WTC11 (cell line): ENCODE measurements at regions of chr1 and their contacts with region 1.

Region 1: DNA sequence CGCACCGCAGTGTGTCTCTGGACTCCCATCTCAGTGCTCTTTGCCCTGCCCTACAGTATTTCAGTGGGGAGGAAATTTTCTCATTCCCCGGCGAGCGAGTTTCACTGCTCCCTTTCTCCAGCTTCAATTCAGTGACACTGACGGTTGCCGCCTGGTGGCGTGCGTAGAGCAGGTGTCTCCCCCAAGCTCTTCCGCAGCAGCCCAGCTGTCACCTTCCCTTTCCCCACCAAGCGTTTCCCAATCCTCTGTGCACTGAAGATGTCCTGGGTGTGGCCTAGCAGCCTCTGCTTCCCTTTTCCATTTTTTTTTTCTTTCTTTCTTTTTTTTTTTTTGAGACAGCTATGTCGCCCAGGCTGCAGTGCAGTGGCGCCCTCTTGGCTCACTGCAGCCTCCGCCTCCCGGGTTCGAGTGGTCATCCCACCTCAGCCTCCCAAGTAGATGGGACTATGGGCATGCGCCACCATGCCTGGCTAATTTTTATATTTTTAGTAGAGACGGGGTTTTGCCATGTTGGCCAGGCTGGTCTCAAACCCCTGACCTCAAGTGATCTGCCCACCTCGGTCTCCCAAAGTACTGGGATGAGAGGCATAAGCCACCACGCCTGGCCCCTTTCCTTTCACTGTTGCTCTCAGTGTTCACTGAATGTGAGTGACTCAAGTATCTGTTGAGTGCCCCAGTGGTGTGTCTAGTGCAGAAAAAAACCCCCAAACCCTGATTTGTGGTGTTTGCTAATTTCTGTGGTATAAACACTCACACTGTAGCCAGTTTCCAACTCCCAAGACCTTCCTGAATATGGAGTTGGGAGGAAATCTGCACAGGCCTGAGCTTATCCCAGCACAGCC is 30.1 kb downstream of the TNFRSF1B start:
- DNase-seq: peak; percentile 64
- ATAC-seq: peak; percentile 74
- H3K4me3 Mint-ChIP-seq: no peak overlapping the region
- H3K27ac Mint-ChIP-seq: no peak overlapping the region
- H3K4me1 Mint-ChIP-seq: peaks cover 13% of the 10 kb centered on the region
- H3K27me3 Mint-ChIP-seq: no peaks in the 10 kb centered on the region
- CTCF ChIP-seq: no peak

Region 2: GRCh38 chr1:12153181-12153785 is 43.6 kb before region 1 on chr1:
- CTCF ChIA-PET with region 1: interaction called, 13 read pairs
- POLR2A ChIA-PET with region 1: no interaction called
- DNase-seq: no peak
- ATAC-seq: no peak
- H3K4me3 Mint-ChIP-seq: no peak overlapping the region
- H3K27ac Mint-ChIP-seq: no peak overlapping the region
- H3K4me1 Mint-ChIP-seq: peaks cover 11% of the 10 kb centered on the region
- H3K27me3 Mint-ChIP-seq: peaks cover 16% of the 10 kb centered on the region
- CTCF ChIP-seq: no peak

Region 3: GRCh38 chr1:12166834-12167492 is 29.9 kb before region 1 on chr1 and contains the start of gene TNFRSF1B:
- CTCF ChIA-PET with region 1: interaction called, 16 read pairs
- POLR2A ChIA-PET with region 1: no interaction called
- DNase-seq: peak; percentile 67
- ATAC-seq: peak; percentile 90
- H3K4me3 Mint-ChIP-seq: peak within 1 kb of the TSS; percentile 69
- H3K27ac Mint-ChIP-seq: no peak within 1 kb of the TSS
- H3K4me1 Mint-ChIP-seq: peaks cover 17% of the 10 kb centered on the region
- H3K27me3 Mint-ChIP-seq: peaks cover 47% of the 10 kb centered on the region
- CTCF ChIP-seq: no peak
- total RNA-seq, gene TNFRSF1B: 1.6 to 2.7 TPM (median 2.1 TPM) in 3 replicates

Region 4: GRCh38 chr1:12177999-12178441 is 18.8 kb before region 1 on chr1:
- CTCF ChIA-PET with region 1: interaction called, 14 read pairs
- POLR2A ChIA-PET with region 1: interaction called, 5 read pairs
- DNase-seq: no peak
- ATAC-seq: peak; percentile 51
- H3K4me3 Mint-ChIP-seq: no peak overlapping the region
- H3K27ac Mint-ChIP-seq: no peak overlapping the region
- H3K4me1 Mint-ChIP-seq: peaks cover 30% of the 10 kb centered on the region
- H3K27me3 Mint-ChIP-seq: no peaks in the 10 kb centered on the region; the same call in 1 of the 2 replicates
- CTCF ChIP-seq: no peak

Region 5: DNA sequence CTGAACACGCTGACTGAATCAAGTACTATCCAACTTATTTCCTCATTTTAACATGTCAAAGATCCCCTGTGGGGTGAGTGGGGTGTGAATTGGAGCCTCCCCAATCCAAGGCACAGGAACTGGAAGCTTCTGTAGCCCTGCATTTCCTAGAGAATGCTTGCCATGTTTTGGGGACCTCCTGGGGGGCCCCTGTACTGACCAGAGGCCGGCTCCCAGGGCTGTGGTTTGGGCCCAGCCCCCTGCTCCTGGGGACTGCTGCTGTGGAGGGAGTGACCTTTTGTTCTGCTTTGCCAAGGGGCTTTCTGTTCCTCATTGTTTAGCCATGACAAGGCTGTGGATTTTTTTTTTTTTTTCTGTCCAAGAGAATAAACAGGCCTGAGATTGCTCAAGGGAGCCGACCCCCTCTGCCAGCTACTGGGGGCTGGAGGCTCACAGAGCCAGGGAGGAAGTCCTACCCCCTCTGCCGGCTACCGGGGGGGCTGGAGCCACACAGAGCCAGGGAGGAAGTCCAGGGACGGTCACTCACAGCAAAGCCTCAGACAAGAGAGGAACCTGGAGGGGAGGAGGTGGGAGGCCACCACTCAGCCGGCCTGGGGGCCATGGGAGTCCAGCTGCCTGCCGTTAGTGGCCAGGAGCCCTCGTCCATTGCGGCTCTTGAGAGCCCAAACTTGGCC is 12.7 kb before region 1 on chr1:
- CTCF ChIA-PET with region 1: interaction called, 14 read pairs
- POLR2A ChIA-PET with region 1: no interaction called
- DNase-seq: no peak
- ATAC-seq: no peak
- H3K4me3 Mint-ChIP-seq: no peak overlapping the region
- H3K27ac Mint-ChIP-seq: 0 out of 2 replicates have a peak overlapping the region, but pooled peaks have one; percentile 32
- H3K4me1 Mint-ChIP-seq: peaks cover 23% of the 10 kb centered on the region
- H3K27me3 Mint-ChIP-seq: no peaks in the 10 kb centered on the region; the same call in 1 of the 2 replicates
- CTCF ChIP-seq: no peak

Region 6: GRCh38 chr1:12208764-12209494 is 12.1 kb after region 1 on chr1:
- CTCF ChIA-PET with region 1: interaction called, 20 read pairs
- POLR2A ChIA-PET with region 1: no interaction called
- DNase-seq: peak; percentile 95
- ATAC-seq: peak; percentile 92
- H3K4me3 Mint-ChIP-seq: no peak overlapping the region
- H3K27ac Mint-ChIP-seq: no peak overlapping the region
- H3K4me1 Mint-ChIP-seq: peaks cover 25% of the 10 kb centered on the region
- H3K27me3 Mint-ChIP-seq: peaks cover 3% of the 10 kb centered on the region; the same call in 1 of the 2 replicates
- CTCF ChIP-seq: peak; percentile 93

Region 7: DNA sequence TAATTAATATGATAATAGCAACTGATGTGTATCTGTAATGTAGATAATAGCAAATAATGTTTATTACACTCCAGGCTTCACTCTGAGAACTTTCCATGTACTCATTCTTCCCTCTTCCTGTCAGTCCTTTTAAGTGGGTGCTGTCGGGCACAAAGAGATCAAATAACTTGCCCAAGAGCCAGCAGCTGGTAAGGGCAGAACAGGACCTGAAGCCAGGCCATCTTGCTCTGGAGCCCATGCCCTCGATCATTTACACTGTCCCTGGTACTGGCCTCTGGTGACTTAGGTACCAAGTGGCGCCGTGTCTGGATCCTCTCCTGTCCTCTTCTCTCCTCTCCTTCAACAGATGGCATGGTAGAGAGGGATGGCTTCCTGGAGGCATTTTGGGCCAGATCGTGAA is 130.1 kb after region 1 on chr1:
- CTCF ChIA-PET with region 1: no interaction called
- POLR2A ChIA-PET with region 1: no interaction called
- DNase-seq: no peak
- ATAC-seq: no peak
- H3K4me3 Mint-ChIP-seq: no peak overlapping the region
- H3K27ac Mint-ChIP-seq: no peak overlapping the region; the same call in 1 of the 2 replicates
- H3K4me1 Mint-ChIP-seq: no peaks in the 10 kb centered on the region
- H3K27me3 Mint-ChIP-seq: no peaks in the 10 kb centered on the region
- CTCF ChIP-seq: no peak

Region 8: DNA sequence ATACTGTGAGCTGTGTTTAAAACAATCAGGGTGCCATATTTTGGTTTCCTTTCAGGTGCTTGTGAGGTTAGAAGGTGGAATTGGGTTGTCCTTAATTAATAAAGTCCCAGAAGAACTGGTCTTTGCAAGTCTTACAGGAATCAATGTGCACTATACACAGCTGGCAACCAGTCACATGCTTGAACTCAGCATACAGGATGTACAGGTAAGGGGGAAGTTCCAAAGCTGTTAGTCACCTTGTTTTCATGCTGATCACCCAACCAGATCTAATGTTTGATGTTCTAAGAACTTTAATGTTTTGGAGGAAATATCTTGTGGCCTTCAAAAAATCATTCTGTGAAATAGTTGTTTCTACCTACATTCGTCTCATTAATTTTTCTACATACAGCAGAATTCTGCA is 189.3 kb after region 1 on chr1:
- CTCF ChIA-PET with region 1: no interaction called
- POLR2A ChIA-PET with region 1: no interaction called
- DNase-seq: no peak
- ATAC-seq: no peak
- H3K4me3 Mint-ChIP-seq: no peak overlapping the region
- H3K27ac Mint-ChIP-seq: no peak overlapping the region
- H3K4me1 Mint-ChIP-seq: no peaks in the 10 kb centered on the region
- H3K27me3 Mint-ChIP-seq: no peaks in the 10 kb centered on the region
- CTCF ChIP-seq: no peak